ENCODE measurements at regions of chr5 and their contacts with region 1.

Region 1: GRCh38 chr5:149114403-149115312 is 26.6 kb upstream of the ABLIM3 start:
- H3K4me3 Mint-ChIP-seq: no peak overlapping the region
- H3K27ac Mint-ChIP-seq: no peak overlapping the region
- H3K4me1 Mint-ChIP-seq: peaks cover 24% of the 10 kb centered on the region
- H3K27me3 Mint-ChIP-seq: no peaks in the 10 kb centered on the region

Region 2: GRCh38 chr5:148711961-148712360 is 402.7 kb before region 1 on chr5:
- intact Hi-C with region 1: no loop called
- H3K4me3 Mint-ChIP-seq: no peak overlapping the region
- H3K27ac Mint-ChIP-seq: no peak overlapping the region
- H3K4me1 Mint-ChIP-seq: no peaks in the 10 kb centered on the region
- H3K27me3 Mint-ChIP-seq: no peaks in the 10 kb centered on the region

Region 3: DNA sequence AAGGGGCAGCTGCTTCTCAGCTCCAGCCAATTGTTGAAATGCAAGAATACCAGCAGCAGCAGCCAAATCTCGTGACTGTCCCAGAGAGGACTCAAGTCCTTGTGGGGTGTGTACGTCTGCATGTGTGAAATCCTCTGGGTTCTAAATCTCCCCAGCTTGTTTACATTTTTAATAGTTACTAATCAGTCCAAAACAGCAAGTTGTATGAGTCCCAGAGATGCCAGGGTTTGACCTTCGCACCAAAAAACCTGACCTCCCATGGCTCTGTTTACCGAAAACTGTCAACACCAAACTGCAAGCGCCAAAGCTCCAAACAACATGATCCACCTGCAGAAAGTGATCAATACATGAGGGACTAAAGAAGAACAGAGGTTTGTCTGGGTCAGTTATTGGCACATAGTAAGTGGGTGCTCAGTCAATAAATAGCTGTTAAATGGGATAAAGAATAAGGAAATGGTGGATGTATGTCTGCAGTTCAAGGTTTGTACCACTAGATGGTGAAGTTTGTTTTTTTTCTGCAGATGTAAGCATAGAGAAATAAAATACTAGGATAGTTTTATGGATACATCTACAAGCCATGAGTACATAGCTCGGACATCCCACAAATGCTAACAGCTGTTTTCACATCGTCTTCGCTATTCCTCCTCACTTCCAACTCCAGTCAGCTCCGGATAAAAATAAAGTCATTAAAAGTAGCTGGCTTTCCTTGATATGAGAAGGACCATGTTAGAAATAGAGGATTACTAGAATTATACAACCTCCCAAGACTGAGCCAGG is 373.5 kb before region 1 on chr5:
- intact Hi-C with region 1: loop called (anchors 5 kb)
- H3K4me3 Mint-ChIP-seq: no peak overlapping the region
- H3K27ac Mint-ChIP-seq: peak overlapping the region; percentile 93
- H3K4me1 Mint-ChIP-seq: peaks cover 66% of the 10 kb centered on the region
- H3K27me3 Mint-ChIP-seq: no peaks in the 10 kb centered on the region

Region 4: DNA sequence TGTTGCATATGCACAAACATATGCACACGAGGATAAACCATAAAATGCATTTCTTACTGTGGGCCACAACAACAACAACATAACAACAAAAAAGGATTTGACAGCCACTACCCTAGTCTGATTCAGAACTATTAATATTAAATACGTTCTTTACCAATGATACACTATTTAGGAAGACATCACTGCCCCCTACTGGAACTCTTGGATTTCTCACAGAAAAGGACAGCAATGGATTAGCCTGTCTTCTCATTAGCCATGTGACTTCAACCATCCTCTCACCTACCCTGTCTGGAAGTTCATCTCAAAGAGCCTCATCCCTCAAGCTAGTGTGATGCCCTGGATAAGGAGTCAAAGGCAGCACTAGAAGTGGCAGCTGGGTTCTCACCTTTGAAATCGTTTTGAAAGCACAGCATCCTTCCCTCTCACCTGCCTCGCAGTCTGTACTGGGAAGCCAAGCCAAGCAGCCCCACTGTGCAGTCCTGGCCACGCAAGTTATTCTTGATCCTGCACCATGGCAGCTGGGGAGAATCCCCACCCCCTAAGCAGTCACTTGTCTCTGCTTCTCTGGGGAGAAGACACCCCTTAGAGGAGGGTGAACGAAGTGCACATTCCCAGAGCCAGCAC is 116.4 kb before region 1 on chr5:
- intact Hi-C with region 1: loop called (anchors 5 kb)
- H3K4me3 Mint-ChIP-seq: no peak overlapping the region
- H3K27ac Mint-ChIP-seq: no peak overlapping the region
- H3K4me1 Mint-ChIP-seq: peaks cover 5% of the 10 kb centered on the region
- H3K27me3 Mint-ChIP-seq: peaks cover 3% of the 10 kb centered on the region

Region 5: GRCh38 chr5:149667084-149667828 is 552.6 kb after region 1 on chr5:
- intact Hi-C with region 1: no loop called
- H3K4me3 Mint-ChIP-seq: no peak overlapping the region
- H3K27ac Mint-ChIP-seq: peak overlapping the region; percentile 78
- H3K4me1 Mint-ChIP-seq: peaks cover 50% of the 10 kb centered on the region
- H3K27me3 Mint-ChIP-seq: no peaks in the 10 kb centered on the region

Measured in dendritic cell treated with granulocyte-macrophage colony-stimulating factor and Interleukin-4, amounts not matched to agents 40 ng/mL and 50 ng/mL, for 4 days (primary cell).